GM12878 (cell line): ENCODE measurements at regions of chr20 and their contacts with region 1.

Region 1: GRCh38 chr20:32789896-32790750 is 27.9 kb downstream of the DNMT3B start:
- DNase-seq: peak; percentile 13
- ATAC-seq: peak; percentile 87
- H3K4me3 ChIP-seq: no peak overlapping the region
- H3K27ac ChIP-seq: no peak overlapping the region; the same call in 1 of the 2 replicates
- H3K4me1 ChIP-seq: peaks cover 24% of the 10 kb centered on the region
- H3K27me3 ChIP-seq: no peaks in the 10 kb centered on the region
- CTCF ChIP-seq: peak; percentile 99; a peak in 5 of 6 replicates
- EP300 ChIP-seq: no peak
- POLR2A ChIP-seq: no peak
- RAD21 ChIP-seq: peak; percentile 97

Region 2: GRCh38 chr20:32779500-32780211 is 10.5 kb before region 1 on chr20:
- CTCF ChIA-PET with region 1: interaction called, 22 read pairs
- POLR2A ChIA-PET with region 1: no interaction called
- RAD21 ChIA-PET with region 1: interaction called, 4 read pairs
- SMC1A ChIA-PET with region 1: interaction called, 4 read pairs
- in situ Hi-C with region 1: no loop called
- intact Hi-C with region 1: no loop called
- DNase-seq: no peak
- ATAC-seq: no peak
- H3K4me3 ChIP-seq: no peak overlapping the region
- H3K27ac ChIP-seq: no peak overlapping the region
- H3K4me1 ChIP-seq: no peaks in the 10 kb centered on the region
- H3K27me3 ChIP-seq: no peaks in the 10 kb centered on the region
- CTCF ChIP-seq: no peak
- EP300 ChIP-seq: no peak
- POLR2A ChIP-seq: no peak
- RAD21 ChIP-seq: no peak

Region 3: GRCh38 chr20:32830437-32830836 is 40.3 kb after region 1 on chr20:
- CTCF ChIA-PET with region 1: interaction called, 8 read pairs
- POLR2A ChIA-PET with region 1: no interaction called
- RAD21 ChIA-PET with region 1: interaction called, 4 read pairs
- SMC1A ChIA-PET with region 1: interaction called, 5 read pairs
- in situ Hi-C with region 1: no loop called
- intact Hi-C with region 1: loop called (anchors 5 kb)
- DNase-seq: no peak
- ATAC-seq: no peak
- H3K4me3 ChIP-seq: no peak overlapping the region
- H3K27ac ChIP-seq: no peak overlapping the region
- H3K4me1 ChIP-seq: no peaks in the 10 kb centered on the region
- H3K27me3 ChIP-seq: no peaks in the 10 kb centered on the region
- CTCF ChIP-seq: no peak
- EP300 ChIP-seq: no peak
- POLR2A ChIP-seq: no peak
- RAD21 ChIP-seq: no peak

Region 4: GRCh38 chr20:32894026-32894483 is 103.9 kb after region 1 on chr20:
- CTCF ChIA-PET with region 1: interaction called, 49 read pairs
- POLR2A ChIA-PET with region 1: no interaction called
- RAD21 ChIA-PET with region 1: interaction called, 8 read pairs
- SMC1A ChIA-PET with region 1: interaction called, 4 read pairs
- in situ Hi-C with region 1: no loop called
- intact Hi-C with region 1: loop called (anchors 1 kb)
- DNase-seq: no peak
- ATAC-seq: peak; percentile 75
- H3K4me3 ChIP-seq: no peak overlapping the region
- H3K27ac ChIP-seq: no peak overlapping the region
- H3K4me1 ChIP-seq: no peaks in the 10 kb centered on the region
- H3K27me3 ChIP-seq: no peaks in the 10 kb centered on the region
- CTCF ChIP-seq: peak; percentile 49 to 69 (median 50); a peak in 5 of 6 replicates
- EP300 ChIP-seq: no peak
- POLR2A ChIP-seq: no peak
- RAD21 ChIP-seq: peak; percentile 55

Region 5: GRCh38 chr20:32945710-32946221 is 155.6 kb after region 1 on chr20:
- CTCF ChIA-PET with region 1: interaction called, 25 read pairs
- POLR2A ChIA-PET with region 1: no interaction called
- RAD21 ChIA-PET with region 1: interaction called, 18 read pairs
- SMC1A ChIA-PET with region 1: interaction called, 17 read pairs
- in situ Hi-C with region 1: no loop called
- intact Hi-C with region 1: loop called (anchors 5 kb)
- DNase-seq: no peak
- ATAC-seq: peak; percentile 82
- H3K4me3 ChIP-seq: no peak overlapping the region
- H3K27ac ChIP-seq: no peak overlapping the region
- H3K4me1 ChIP-seq: no peaks in the 10 kb centered on the region
- H3K27me3 ChIP-seq: no peaks in the 10 kb centered on the region
- CTCF ChIP-seq: peak; percentile 41 to 61 (median 46)
- EP300 ChIP-seq: no peak
- POLR2A ChIP-seq: no peak
- RAD21 ChIP-seq: peak; percentile 19; the same call in 1 of the 2 replicates

Region 6: DNA sequence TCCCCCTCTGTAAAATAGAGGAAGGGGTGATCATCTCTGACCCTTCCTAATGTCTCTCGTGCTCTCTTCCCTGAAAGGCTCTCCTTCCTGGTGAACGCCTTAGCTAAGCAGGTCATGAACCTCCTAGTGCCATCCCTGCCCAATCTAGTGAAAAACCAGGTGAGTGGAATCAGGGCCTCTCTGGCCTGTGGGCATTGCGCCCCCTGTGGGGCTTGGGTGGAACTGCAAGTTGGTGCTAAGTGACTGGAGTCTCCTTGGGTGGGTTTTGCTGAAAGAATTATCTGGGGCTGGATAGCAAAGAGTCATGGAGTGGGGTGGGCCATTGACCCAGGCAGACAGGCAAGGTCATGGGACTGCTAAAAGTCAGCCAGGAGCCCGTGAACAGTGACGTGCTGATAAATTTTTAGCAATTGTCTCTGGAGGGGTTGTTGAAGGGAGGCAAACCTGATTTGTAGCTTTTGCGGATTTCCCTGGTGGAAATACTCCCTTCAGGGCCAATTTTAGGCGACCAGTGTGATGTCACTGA is 501.8 kb after region 1 on chr20:
- CTCF ChIA-PET with region 1: interaction called, 7 read pairs
- POLR2A ChIA-PET with region 1: no interaction called
- RAD21 ChIA-PET with region 1: interaction called, 3 read pairs
- SMC1A ChIA-PET with region 1: no interaction called
- in situ Hi-C with region 1: no loop called
- intact Hi-C with region 1: loop called (anchors 5 kb)
- DNase-seq: no peak
- ATAC-seq: peak; percentile 70
- H3K4me3 ChIP-seq: no peak overlapping the region
- H3K27ac ChIP-seq: no peak overlapping the region
- H3K4me1 ChIP-seq: no peaks in the 10 kb centered on the region
- H3K27me3 ChIP-seq: no peaks in the 10 kb centered on the region
- CTCF ChIP-seq: peak; percentile 77 to 99 (median 99)
- EP300 ChIP-seq: no peak
- POLR2A ChIP-seq: no peak
- RAD21 ChIP-seq: peak; percentile 84